Cardiac septum (tissue), 1 donor: ENCODE measurements at regions of chr13 and their contacts with region 1.

Region 1: DNA sequence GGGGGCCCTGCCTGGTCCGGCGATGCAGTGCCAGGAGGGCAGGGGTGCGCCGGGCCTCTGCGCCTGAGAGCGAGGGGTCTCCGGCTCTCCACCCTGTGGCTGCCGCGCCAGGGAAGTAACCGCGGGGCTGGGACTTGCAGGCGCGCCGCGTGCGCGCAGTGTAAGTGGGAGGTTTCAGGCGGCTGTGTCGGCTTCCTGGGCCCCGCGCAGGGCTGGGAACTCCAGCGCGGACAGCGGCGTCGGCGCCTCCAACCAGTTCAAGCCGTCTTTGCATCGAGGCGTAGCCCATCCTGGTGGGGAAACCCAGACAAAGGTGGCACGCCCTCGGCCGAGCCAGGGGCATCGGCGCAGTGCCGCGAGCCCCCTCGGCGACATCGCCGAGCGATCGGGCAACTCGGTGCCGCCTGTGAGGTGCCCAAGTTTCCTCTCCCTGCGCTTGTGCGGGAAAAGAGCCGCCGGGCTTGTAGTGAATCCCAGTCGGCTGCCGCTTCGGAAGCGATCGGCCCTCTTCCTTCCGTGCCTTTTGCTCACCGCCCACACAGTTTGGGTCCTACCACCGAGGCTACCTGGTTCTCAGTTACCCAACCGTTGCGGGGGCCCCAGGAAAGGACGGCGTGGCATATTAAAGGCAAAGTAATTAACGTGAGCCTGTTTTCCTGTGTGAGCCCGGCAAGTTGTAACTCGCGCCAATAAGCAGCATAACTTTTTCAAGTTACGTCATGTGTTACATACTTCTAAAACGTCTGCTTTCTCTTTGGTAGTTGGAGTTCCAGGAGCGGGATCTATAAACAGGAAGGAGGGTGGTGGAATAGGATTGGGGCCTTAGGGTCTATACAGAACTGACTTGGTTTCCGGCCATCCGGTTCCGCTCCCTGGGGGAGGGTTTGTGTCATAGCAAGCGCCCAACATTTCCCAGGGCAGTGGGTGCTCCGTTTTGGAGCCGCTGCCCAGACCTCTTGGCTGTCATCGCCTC is 1.2 kb downstream of the LRCH1 start:
- DNase-seq: peak; percentile 88

Region 2: GRCh38 chr13:46492946-46493345 is 61.2 kb before region 1 on chr13:
- intact Hi-C with region 1: loop called (anchors 5 kb)
- DNase-seq: no peak

Region 3: GRCh38 chr13:46578590-46578975 is 24.4 kb after region 1 on chr13:
- intact Hi-C with region 1: no loop called
- DNase-seq: no peak

Region 4: GRCh38 chr13:46595136-46595886 is 41.1 kb after region 1 on chr13:
- intact Hi-C with region 1: loop called (anchors 5 kb)
- DNase-seq: no peak

Region 5: DNA sequence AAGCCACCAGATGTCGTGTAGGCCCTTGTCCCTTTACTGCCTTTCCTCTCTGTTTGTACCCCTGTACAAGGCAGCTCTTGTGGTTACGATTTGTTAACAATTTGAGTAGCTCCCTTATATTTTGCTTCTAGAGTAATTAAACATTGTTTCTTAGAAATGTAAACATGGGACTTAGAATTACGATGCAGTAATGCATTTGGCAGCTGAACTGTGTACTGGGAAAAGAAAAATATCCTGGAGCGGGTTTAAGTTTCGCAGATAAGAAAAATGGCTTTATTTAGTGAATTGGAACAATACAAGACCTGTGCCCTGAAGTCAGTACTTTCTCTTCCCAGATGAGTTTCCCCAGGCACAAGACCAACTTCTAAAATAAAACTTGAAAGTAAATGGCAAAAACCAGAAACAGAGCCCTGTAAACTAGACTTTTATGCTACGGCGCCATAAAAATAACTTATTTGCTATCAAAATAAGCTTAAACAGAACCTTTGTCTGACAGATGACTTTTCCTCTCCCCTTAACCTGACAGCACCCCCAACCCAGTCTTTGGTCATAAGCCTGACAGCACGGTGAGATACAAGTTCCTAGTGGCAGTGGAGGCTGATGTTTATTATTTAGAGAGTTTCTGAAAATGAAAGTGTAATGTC is 61.8 kb after region 1 on chr13:
- intact Hi-C with region 1: loop called (anchors 5 kb)
- DNase-seq: no peak

Region 6: DNA sequence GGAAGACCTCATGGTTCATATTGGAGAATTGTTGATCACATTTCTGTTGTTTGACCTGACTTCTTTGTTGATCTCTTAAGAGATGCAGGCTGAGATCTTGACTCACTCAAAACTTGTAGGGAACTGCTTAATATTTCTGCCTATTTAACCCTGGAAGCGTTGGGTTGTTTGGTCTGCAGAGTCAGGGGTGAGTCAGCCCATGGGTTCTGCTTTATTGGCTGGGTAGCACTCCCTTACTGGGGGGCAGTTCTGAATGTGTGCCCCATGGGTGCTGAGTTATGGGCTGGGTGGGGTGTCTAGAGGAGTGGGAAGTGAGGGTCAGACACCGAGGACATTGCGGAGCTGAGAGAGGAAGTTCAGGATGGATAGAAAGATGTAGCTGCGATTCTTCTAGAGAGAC is 86.7 kb after region 1 on chr13:
- intact Hi-C with region 1: loop called (anchors 5 kb)
- DNase-seq: no peak

Region 7: GRCh38 chr13:46721054-46721453 is 166.9 kb after region 1 on chr13:
- intact Hi-C with region 1: loop called (anchors 1 kb)
- DNase-seq: no peak

Region 8: GRCh38 chr13:46796515-46797474 is 242.6 kb after region 1 on chr13 and contains the start of gene ESD:
- intact Hi-C with region 1: loop called (anchors 5 kb)
- DNase-seq: peak; percentile 95
- total RNA-seq, gene ESD: 94.9 TPM